GM10248 (cell line): ENCODE measurements at regions of chr10 and their contacts with region 1.

Region 1: GRCh38 chr10:100743626-100744135 is 1.7 kb upstream of the PAX2 start:
- DNase-seq: peak; percentile 79
- CTCF ChIP-seq: peak; percentile 69

Region 2: GRCh38 chr10:100562008-100562711 is 181.5 kb before region 1 on chr10:
- CTCF ChIA-PET with region 1: interaction called, 25 read pairs
- POLR2A ChIA-PET with region 1: no interaction called
- DNase-seq: peak; percentile 84
- CTCF ChIP-seq: peak; percentile 87

Region 3: GRCh38 chr10:100670828-100671479 is 72.7 kb before region 1 on chr10:
- CTCF ChIA-PET with region 1: interaction called, 24 read pairs
- POLR2A ChIA-PET with region 1: interaction called, 3 read pairs
- DNase-seq: peak; percentile 87
- CTCF ChIP-seq: peak; percentile 86

Region 4: DNA sequence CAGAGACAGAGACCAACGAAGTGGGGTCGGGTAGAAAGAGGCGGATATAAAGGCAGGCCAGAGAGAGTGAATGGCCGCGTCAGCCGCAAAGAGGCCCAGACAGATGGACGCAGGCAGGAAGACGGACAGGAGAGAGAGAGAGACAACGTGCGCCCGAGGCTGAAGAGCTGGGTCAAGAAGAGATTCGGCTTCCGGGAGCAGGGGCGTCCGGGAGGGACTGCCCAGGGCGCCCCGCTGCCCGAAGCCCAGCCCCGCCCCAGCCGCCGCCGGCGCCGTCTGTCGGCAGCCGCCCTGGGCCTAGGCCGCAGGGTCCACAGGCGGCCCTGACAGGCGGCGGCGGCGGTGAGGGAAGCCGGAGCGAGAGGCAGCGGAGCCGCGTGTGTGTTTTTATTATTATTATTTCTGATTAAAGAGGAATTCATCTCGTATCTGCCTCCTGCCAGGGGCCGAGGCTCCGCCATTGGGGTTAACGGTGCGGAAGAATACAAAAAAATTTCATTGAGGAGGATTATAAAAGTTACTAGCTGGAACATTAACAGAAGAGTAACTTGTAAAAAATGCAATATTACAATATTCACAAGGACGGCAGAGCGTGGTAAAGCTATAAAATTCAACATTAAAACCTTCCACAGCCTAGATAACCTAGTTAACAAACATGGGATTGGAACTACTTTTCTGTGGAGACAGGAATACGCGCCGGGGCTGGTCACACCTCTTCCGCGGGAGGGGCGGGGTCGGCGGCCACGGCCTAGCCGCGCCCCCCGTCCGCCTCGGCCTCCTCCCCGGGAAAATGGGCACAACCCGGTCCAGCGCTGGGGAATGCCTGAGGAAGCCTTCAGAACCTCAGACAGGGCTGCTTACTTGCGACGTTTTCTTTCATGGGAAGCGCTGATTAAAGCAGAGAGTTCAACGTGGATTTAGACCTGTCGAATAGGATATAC is 28.0 kb before region 1 on chr10:
- CTCF ChIA-PET with region 1: interaction called, 13 read pairs
- POLR2A ChIA-PET with region 1: no interaction called
- DNase-seq: no peak
- CTCF ChIP-seq: no peak

Region 5: GRCh38 chr10:100755821-100756220 is 12.1 kb after region 1 on chr10:
- CTCF ChIA-PET with region 1: interaction called, 39 read pairs
- POLR2A ChIA-PET with region 1: no interaction called
- DNase-seq: no peak
- CTCF ChIP-seq: no peak